ENCODE measurements at regions of chr1 and their contacts with region 1.

Region 1: GRCh38 chr1:230109895-230110667 is 43.0 kb downstream of the GALNT2 start:
- DNase-seq: peak; percentile 78
- H3K4me3 Mint-ChIP-seq: no peak overlapping the region
- H3K27ac Mint-ChIP-seq: peak overlapping the region; percentile 70
- H3K4me1 Mint-ChIP-seq: peaks cover 84% of the 10 kb centered on the region
- H3K27me3 Mint-ChIP-seq: no peaks in the 10 kb centered on the region

Region 2: DNA sequence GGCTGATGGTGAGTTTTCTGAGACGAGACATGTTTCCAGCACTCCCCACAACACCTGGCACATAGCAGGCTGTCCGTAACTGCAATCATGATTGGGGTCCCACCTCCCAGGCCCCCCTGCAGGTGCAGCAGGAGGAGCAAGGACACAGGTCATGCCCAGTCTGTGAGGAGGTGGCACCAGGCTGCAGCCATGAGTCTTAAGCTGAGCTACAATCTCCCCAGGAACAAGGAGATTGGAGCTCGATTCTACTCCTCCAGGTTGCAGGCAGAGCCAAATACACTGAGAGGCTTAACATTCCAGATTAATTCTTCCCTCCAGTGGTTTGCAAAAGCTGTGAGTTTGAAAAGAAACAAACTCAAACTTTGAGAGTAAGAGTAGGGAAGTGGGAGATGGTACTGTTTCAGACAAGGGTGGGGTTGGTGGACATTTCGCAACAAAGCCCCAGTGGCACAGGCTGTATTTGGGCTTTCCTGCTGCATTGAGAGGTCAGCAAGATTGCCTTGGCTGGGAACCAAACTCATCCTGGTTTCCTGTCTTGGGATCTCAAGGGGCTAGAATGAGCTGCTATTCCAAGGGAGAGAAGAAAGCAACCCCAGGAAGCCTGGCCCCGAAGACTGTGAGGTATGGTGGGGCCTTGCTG is 107.8 kb before region 1 on chr1:
- CTCF ChIA-PET with region 1: no interaction called
- DNase-seq: no peak
- H3K4me3 Mint-ChIP-seq: no peak overlapping the region
- H3K27ac Mint-ChIP-seq: no peak overlapping the region
- H3K4me1 Mint-ChIP-seq: no peaks in the 10 kb centered on the region
- H3K27me3 Mint-ChIP-seq: peaks cover 30% of the 10 kb centered on the region

Region 3: DNA sequence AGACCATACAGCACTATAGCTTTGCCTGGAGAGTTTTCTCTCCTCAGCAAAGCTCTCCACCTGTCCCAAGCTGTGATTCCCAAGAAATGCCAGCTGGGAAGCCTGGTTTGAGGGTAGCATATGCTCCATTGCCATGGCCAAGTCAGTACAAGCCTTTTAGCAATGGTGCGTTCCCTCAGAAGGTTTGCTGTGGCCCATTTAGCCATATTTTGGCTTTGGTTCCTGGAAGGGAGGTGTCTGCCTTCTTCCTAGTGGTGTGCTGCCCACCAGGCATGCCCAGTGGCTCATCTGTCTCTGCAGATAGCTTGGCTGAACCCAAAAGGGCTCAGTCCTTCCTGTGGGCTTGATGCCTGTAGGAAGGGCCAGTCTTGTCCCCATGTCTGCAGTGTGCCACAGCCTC is 10.6 kb before region 1 on chr1:
- CTCF ChIA-PET with region 1: no interaction called
- DNase-seq: no peak
- H3K4me3 Mint-ChIP-seq: no peak overlapping the region
- H3K27ac Mint-ChIP-seq: no peak overlapping the region
- H3K4me1 Mint-ChIP-seq: peaks cover 27% of the 10 kb centered on the region
- H3K27me3 Mint-ChIP-seq: no peaks in the 10 kb centered on the region

Region 4: DNA sequence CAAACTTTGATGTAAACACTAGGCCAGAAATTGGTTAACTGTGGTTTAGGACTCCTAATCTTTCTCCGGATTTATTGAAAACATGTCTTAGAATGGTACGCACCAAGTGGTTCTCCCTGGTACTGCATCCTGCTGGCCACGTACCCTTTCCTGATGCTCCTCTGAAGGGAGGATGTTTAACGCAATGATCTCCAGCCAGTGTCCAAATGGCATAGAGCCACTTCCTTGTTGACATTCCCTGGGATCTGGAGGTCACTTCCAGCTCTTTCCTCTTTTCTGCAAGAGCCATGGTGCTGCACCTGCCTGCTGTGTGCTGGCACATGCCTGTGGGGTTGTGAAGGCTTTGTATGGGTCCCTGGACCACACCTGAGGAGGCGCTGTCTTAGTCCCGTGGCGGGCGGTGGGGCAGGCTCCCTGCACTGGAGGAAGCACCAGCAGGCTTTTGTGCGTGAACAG is 10.9 kb after region 1 on chr1:
- CTCF ChIA-PET with region 1: interaction called, 40 read pairs
- DNase-seq: peak; percentile 37
- H3K4me3 Mint-ChIP-seq: no peak overlapping the region
- H3K27ac Mint-ChIP-seq: no peak overlapping the region
- H3K4me1 Mint-ChIP-seq: peaks cover 46% of the 10 kb centered on the region
- H3K27me3 Mint-ChIP-seq: no peaks in the 10 kb centered on the region

Measured in activated naive CD4-positive, alpha-beta T cell treated with anti-CD3 and anti-CD28 coated beads, Interleukin-2, amount 10 ng/mL, durations not matched to agents 7 days and 5 days (primary cell).